AG04450 (cell line): ENCODE measurements at regions of chr2 and their contacts with region 1.

Region 1: DNA sequence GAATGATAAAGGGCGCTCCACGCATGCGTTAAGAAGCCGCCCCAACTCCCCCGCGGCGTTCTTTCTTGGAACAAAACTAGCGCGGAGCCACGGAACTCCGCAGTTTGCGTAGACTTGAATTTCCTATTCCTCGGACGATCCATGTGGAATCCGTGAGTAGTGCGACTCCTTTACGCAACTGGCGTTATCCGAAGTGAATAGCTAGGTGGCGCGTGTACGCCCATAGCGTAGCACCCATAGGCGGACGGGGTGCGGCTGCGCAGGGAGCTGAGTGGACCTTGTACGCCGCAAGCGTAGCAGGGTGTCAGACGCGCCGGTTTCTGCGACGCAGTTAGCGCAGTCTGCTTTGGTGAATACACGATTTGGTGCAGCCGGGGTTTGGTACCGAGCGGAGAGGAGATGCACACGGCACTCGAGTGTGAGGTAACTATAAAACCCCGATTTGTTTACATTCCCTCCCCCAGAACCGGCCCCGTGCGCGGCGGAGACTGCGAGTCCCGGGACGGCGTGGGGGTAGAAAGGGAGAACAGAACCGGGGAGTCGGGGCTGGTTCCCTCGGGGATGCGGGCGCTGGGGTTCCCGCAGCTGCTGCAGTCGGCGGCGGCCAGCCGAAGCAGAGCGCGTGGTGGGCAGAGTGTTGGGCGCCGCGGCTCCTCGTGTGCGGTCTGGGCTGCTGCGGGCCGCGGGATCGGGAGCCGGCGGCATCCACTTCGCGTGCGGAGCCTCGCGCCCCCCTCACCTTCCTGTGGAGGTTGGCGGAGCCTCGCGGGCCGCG is at the start of gene SLC39A10:
- DNase-seq: peak; percentile 96
- H3K4me3 ChIP-seq: peak within 1 kb of the TSS; percentile 83
- H3K27ac ChIP-seq: peak within 1 kb of the TSS; percentile 98
- H3K27me3 ChIP-seq: no peaks in the 10 kb centered on the region
- CTCF ChIP-seq: no peak
- polyA plus RNA-seq, gene SLC39A10: 26.1 and 38.5 TPM in 2 replicates

Region 2: GRCh38 chr2:195326537-195326936 is 330.5 kb before region 1 on chr2:
- CTCF ChIA-PET with region 1: interaction called, 50 read pairs
- POLR2A ChIA-PET with region 1: no interaction called
- DNase-seq: no peak
- H3K4me3 ChIP-seq: no peak overlapping the region
- H3K27ac ChIP-seq: no peak overlapping the region
- H3K27me3 ChIP-seq: no peaks in the 10 kb centered on the region
- CTCF ChIP-seq: no peak

Region 3: GRCh38 chr2:195382186-195382585 is 274.9 kb before region 1 on chr2:
- CTCF ChIA-PET with region 1: interaction called, 11 read pairs
- POLR2A ChIA-PET with region 1: no interaction called
- DNase-seq: no peak
- H3K4me3 ChIP-seq: no peak overlapping the region
- H3K27ac ChIP-seq: no peak overlapping the region
- H3K27me3 ChIP-seq: no peaks in the 10 kb centered on the region
- CTCF ChIP-seq: no peak

Region 4: GRCh38 chr2:195520671-195521155 is 136.3 kb before region 1 on chr2:
- CTCF ChIA-PET with region 1: interaction called, 8 read pairs
- POLR2A ChIA-PET with region 1: interaction called, 19 read pairs
- DNase-seq: peak; percentile 94
- H3K4me3 ChIP-seq: no peak overlapping the region
- H3K27ac ChIP-seq: peak overlapping the region; percentile 93
- H3K27me3 ChIP-seq: no peaks in the 10 kb centered on the region
- CTCF ChIP-seq: no peak

Region 5: DNA sequence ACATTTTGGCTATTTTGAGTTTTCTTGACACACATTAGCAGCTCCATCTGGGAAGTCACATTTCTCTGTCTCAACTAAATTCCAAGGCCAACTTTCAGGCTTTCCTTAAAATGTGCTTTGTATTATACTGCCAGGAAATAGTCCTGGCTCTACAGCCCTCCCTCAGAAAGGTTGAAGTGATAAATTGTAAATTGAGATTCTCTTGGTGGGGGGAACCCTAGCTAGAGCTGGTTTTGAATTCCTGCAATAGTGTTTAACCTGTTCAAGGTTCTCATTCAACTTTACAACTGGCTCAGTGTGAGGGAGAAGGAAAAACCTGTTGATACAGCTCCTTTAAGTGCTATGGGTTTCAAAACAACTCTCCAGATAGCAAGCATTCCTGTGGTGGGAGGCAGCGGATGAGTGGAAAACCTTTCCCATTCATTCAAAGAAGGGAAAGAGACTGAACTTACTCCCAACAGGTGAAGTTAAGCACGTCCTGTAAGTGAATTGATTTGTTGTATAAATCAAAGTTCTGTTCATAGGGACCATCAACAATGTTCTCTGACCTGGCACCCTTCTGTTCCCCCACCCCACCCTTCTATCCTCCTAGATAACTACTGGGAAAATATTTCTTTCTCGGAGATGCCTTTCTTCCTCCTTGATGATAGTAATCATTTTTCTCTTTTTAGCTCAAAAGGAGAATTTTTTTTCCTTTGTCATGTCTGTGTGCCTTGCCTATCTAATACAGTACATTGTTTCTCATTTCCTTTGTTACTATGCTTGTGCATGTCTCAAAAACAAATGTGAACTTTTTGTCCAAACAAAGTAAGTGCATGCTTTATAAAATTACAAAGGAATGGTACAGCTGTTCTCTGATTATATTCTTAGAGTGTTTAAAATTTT is 44.2 kb before region 1 on chr2:
- CTCF ChIA-PET with region 1: interaction called, 7 read pairs
- POLR2A ChIA-PET with region 1: interaction called, 36 read pairs
- DNase-seq: peak; percentile 54
- H3K4me3 ChIP-seq: peak overlapping the region; percentile 57
- H3K27ac ChIP-seq: peak overlapping the region; percentile 85
- H3K27me3 ChIP-seq: no peaks in the 10 kb centered on the region
- CTCF ChIP-seq: no peak

Region 6: DNA sequence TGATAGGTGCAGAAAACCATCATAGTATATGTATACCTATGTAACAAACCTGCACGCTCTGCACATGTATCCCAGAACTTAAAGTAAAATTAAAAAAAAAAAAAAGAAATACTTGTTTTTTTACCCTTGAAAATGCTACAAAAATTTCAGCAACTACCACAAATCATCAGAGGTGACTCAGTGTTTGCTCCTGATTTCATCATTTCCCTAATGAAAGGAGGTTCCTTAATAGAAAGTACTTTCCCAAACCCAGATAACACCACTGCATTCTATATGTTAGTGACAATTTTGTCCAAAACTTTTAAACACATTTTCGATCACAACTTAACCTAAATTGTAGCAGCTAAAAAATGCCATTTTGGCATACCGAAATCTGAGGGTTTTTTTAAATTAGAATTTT is 163.3 kb after region 1 on chr2:
- CTCF ChIA-PET with region 1: no interaction called
- POLR2A ChIA-PET with region 1: no interaction called
- DNase-seq: no peak
- H3K4me3 ChIP-seq: no peak overlapping the region
- H3K27ac ChIP-seq: no peak overlapping the region
- H3K27me3 ChIP-seq: no peaks in the 10 kb centered on the region
- CTCF ChIP-seq: no peak

Region 7: GRCh38 chr2:195984923-195985726 is 328.1 kb after region 1 on chr2:
- CTCF ChIA-PET with region 1: no interaction called
- POLR2A ChIA-PET with region 1: no interaction called
- DNase-seq: no peak
- H3K4me3 ChIP-seq: no peak overlapping the region
- H3K27ac ChIP-seq: no peak overlapping the region
- H3K27me3 ChIP-seq: no peaks in the 10 kb centered on the region
- CTCF ChIP-seq: no peak

Region 8: GRCh38 chr2:196068271-196069209 is 411.5 kb after region 1 on chr2 and contains the start of gene DNAH7:
- CTCF ChIA-PET with region 1: interaction called, 87 read pairs
- POLR2A ChIA-PET with region 1: no interaction called
- DNase-seq: peak; percentile 58
- H3K4me3 ChIP-seq: peak within 1 kb of the TSS; percentile 96
- H3K27ac ChIP-seq: peak within 1 kb of the TSS; percentile 60
- H3K27me3 ChIP-seq: no peaks in the 10 kb centered on the region
- CTCF ChIP-seq: peak; percentile 99
- polyA plus RNA-seq, gene DNAH7: 0.74 and 1.2 TPM in 2 replicates